GM12878 (cell line): ENCODE measurements at regions of chr17 and their contacts with region 1.

Region 1: DNA sequence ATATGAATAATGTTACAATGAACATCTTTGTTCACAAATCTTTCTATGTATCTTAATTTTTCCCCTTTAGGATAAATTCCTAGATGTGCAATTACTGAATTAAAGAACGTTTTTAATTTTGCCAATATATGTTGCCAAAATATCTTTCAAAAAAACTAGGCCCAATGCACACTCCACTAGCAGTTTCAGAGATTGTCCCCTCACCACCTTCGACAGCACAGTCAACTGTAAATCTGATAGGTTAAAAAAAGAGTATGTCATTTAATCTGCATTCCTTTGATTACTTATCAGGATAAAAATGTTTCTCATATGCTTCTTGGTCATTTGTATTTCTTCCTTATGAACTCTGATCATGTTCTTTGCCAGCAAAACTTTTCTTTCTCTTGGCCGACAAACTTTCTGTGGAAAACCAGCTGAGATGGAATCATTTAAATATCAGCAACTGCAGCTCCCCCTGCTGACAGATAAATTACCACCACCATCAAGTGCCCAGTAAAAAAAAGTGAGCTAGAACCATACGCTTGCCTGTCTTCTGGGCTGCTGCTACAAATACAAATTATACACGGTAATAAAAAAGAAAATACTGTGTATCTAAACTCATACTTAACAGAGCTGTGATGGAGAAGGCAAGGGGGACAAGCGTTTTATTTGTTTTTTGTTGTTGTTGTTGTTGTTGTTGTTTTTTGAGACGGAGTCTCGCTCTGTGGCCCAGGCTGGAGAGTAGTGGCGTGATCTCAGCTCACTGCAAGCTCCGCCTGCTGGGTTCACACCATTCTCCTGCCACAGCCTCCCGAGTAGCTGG is 19.6 kb upstream of the KANSL1 start:
- DNase-seq: no peak
- ATAC-seq: peak; percentile 89
- H3K4me3 ChIP-seq: no peak overlapping the region
- H3K27ac ChIP-seq: no peak overlapping the region
- H3K4me1 ChIP-seq: no peaks in the 10 kb centered on the region
- H3K27me3 ChIP-seq: no peaks in the 10 kb centered on the region
- CTCF ChIP-seq: peak; percentile 77 to 93 (median 89)
- EP300 ChIP-seq: no peak
- POLR2A ChIP-seq: no peak
- RAD21 ChIP-seq: peak; percentile 91

Region 2: DNA sequence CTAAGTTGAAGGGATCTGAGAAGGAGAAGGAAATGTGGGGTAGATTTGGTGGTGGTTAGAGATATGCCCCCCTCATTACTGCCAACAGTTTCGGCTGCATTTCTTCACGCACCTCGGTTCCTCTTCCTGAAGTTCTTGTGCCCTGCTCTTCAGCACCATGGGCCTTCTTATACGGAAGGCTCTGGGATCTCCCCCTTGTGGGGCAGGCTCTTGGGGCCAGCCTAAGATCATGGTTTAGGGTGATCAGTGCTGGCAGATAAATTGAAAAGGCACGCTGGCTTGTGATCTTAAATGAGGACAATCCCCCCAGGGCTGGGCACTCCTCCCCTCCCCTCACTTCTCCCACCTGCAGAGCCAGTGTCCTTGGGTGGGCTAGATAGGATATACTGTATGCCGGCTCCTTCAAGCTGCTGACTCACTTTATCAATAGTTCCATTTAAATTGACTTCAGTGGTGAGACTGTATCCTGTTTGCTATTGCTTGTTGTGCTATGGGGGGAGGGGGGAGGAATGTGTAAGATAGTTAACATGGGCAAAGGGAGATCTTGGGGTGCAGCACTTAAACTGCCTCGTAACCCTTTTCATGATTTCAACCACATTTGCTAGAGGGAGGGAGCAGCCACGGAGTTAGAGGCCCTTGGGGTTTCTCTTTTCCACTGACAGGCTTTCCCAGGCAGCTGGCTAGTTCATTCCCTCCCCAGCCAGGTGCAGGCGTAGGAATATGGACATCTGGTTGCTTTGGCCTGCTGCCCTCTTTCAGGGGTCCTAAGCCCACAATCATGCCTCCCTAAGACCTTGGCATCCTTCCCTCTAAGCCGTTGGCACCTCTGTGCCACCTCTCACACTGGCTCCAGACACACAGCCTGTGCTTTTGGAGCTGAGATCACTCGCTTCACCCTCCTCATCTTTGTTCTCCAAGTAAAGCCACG is 185.5 kb before region 1 on chr17:
- CTCF ChIA-PET with region 1: interaction called, 13 read pairs
- POLR2A ChIA-PET with region 1: no interaction called
- RAD21 ChIA-PET with region 1: interaction called, 4 read pairs
- SMC1A ChIA-PET with region 1: no interaction called
- in situ Hi-C with region 1: no loop called
- intact Hi-C with region 1: no loop called
- DNase-seq: no peak
- ATAC-seq: no peak
- H3K4me3 ChIP-seq: no peak overlapping the region
- H3K27ac ChIP-seq: no peak overlapping the region
- H3K4me1 ChIP-seq: peaks cover 11% of the 10 kb centered on the region
- H3K27me3 ChIP-seq: no peaks in the 10 kb centered on the region
- CTCF ChIP-seq: no peak
- EP300 ChIP-seq: no peak
- POLR2A ChIP-seq: peak; percentile 34; the same call in 1 of the 2 replicates
- RAD21 ChIP-seq: no peak

Region 3: GRCh38 chr17:46089389-46089965 is 123.4 kb before region 1 on chr17:
- CTCF ChIA-PET with region 1: interaction called, 11 read pairs
- POLR2A ChIA-PET with region 1: no interaction called
- RAD21 ChIA-PET with region 1: interaction called, 4 read pairs
- SMC1A ChIA-PET with region 1: interaction called, 4 read pairs
- in situ Hi-C with region 1: no loop called
- intact Hi-C with region 1: no loop called
- DNase-seq: no peak
- ATAC-seq: no peak
- H3K4me3 ChIP-seq: no peak overlapping the region
- H3K27ac ChIP-seq: no peak overlapping the region
- H3K4me1 ChIP-seq: no peaks in the 10 kb centered on the region
- H3K27me3 ChIP-seq: no peaks in the 10 kb centered on the region
- CTCF ChIP-seq: no peak
- EP300 ChIP-seq: no peak
- POLR2A ChIP-seq: no peak
- RAD21 ChIP-seq: no peak

Region 4: DNA sequence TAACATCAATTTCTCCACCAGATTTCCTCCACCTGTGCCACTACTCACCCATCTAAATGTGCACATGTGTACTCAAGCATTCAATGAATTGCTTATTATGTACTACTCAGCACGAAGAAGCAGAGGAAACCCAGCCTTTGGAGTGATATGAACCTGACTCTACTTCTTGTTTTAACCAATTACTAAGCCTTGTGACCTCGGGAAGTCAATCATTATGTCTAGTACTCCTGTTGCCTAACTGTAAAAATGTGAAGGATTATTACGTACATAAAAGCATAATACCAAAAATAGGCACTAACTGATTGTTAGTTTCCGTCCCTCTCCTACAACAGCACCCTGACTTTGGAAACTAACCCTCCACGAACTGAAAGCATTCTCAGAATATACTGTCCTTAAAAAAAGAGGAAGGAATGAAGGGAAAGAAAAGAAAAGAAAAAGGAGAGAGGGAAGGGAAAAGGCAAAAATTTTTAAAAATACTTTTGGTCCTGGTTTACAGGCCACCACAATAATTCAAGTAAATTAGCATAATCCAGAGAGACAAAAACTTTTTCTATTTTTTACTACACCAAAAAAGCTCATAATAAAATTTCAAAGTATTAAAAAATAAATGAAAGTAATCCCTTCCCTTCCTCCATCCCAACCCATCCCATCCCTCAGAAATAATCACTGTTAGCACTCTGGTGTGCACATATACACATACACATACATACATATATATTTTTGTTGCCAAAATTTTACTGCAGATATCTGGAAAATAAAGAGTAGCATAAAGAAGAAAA is 73.2 kb before region 1 on chr17:
- CTCF ChIA-PET with region 1: interaction called, 12 read pairs
- POLR2A ChIA-PET with region 1: interaction called, 5 read pairs
- RAD21 ChIA-PET with region 1: interaction called, 11 read pairs
- SMC1A ChIA-PET with region 1: no interaction called
- in situ Hi-C with region 1: no loop called
- intact Hi-C with region 1: no loop called
- DNase-seq: no peak
- ATAC-seq: peak; percentile 45
- H3K4me3 ChIP-seq: peak overlapping the region; percentile 41
- H3K27ac ChIP-seq: peak overlapping the region; percentile 36
- H3K4me1 ChIP-seq: peaks cover 81% of the 10 kb centered on the region
- H3K27me3 ChIP-seq: no peaks in the 10 kb centered on the region
- CTCF ChIP-seq: no peak
- EP300 ChIP-seq: no peak
- POLR2A ChIP-seq: no peak
- RAD21 ChIP-seq: no peak

Region 5: DNA sequence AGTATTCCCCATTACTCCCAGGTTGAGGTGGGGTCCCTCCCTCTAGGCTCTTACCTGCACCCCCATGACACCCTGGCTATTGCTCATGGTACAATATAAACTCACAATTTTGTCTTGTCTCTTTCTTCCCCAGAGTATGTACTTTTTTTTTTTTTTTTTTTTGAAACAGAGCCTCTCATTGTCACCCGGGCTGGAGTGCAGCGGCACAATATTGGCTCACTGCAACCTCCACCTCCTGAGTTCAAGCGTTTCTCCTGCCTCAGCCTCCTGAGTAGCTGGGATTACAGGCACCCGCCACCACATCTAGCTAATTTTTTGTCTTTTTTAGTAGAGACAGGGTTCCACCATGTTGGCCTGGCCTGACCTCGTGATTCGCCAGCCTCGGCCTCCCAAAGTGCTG is 28.1 kb before region 1 on chr17:
- CTCF ChIA-PET with region 1: interaction called, 39 read pairs
- POLR2A ChIA-PET with region 1: interaction called, 7 read pairs
- RAD21 ChIA-PET with region 1: interaction called, 41 read pairs
- SMC1A ChIA-PET with region 1: interaction called, 22 read pairs
- in situ Hi-C with region 1: no loop called
- intact Hi-C with region 1: no loop called
- DNase-seq: no peak
- ATAC-seq: no peak
- H3K4me3 ChIP-seq: no peak overlapping the region
- H3K27ac ChIP-seq: no peak overlapping the region
- H3K4me1 ChIP-seq: peaks cover 37% of the 10 kb centered on the region
- H3K27me3 ChIP-seq: no peaks in the 10 kb centered on the region
- CTCF ChIP-seq: no peak
- EP300 ChIP-seq: no peak
- POLR2A ChIP-seq: no peak
- RAD21 ChIP-seq: no peak